Endothelial cell of umbilical vein (primary cell): ENCODE measurements at regions of chr6 and their contacts with region 1.

Region 1: GRCh38 chr6:1381481-1382330 is 7.7 kb upstream of the FOXF2 start:
- DNase-seq: peak; percentile 3
- H3K4me3 ChIP-seq: no peak overlapping the region
- H3K27ac ChIP-seq: no peak overlapping the region
- H3K4me1 ChIP-seq: no peaks in the 10 kb centered on the region
- H3K27me3 ChIP-seq: peaks cover 88 to 98% of the 10 kb centered on the region in 2 experiments
- CTCF ChIP-seq: peak; percentile 73 to 74
- POLR2A ChIP-seq: no peak

Region 2: DNA sequence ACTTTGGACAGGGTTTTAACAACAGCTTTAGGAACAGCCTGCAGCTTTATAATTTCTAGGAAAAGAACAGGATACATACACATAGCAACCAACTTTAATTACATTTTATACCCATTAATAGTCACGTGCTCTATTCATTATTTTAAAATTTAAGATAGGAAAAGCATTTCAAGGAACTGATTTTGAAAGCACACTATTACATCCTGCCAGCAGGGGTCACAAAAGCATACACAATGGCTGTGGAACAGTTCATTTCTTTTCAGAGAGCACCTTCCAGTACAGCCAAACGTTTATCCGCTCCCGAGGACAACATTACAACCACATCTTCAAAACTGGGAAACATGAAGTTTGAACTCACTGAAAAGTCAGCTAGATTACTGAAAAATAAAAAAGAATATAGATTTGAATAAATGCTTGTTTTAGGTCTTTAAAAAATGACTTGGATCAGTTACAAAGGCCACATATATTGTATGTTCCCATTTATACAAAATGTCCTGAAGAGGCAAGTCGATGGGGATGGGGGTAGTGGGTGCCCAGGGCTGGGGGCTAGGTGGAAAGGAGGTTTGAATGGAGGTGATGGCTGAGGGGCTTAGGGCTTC is 584.1 kb before region 1 on chr6:
- CTCF ChIA-PET with region 1: interaction called, 21 read pairs
- POLR2A ChIA-PET with region 1: no interaction called
- dilution Hi-C with region 1: no loop called
- intact Hi-C with region 1: loop called (anchors 1 kb)
- DNase-seq: peak; percentile 65
- H3K4me3 ChIP-seq: no peak overlapping the region
- H3K27ac ChIP-seq: no peak overlapping the region
- H3K4me1 ChIP-seq: no peaks in the 10 kb centered on the region
- H3K27me3 ChIP-seq: peaks cover 3 to 16% of the 10 kb centered on the region in 2 experiments
- CTCF ChIP-seq: peak; percentile 55 to 61
- POLR2A ChIP-seq: no peak

Region 3: DNA sequence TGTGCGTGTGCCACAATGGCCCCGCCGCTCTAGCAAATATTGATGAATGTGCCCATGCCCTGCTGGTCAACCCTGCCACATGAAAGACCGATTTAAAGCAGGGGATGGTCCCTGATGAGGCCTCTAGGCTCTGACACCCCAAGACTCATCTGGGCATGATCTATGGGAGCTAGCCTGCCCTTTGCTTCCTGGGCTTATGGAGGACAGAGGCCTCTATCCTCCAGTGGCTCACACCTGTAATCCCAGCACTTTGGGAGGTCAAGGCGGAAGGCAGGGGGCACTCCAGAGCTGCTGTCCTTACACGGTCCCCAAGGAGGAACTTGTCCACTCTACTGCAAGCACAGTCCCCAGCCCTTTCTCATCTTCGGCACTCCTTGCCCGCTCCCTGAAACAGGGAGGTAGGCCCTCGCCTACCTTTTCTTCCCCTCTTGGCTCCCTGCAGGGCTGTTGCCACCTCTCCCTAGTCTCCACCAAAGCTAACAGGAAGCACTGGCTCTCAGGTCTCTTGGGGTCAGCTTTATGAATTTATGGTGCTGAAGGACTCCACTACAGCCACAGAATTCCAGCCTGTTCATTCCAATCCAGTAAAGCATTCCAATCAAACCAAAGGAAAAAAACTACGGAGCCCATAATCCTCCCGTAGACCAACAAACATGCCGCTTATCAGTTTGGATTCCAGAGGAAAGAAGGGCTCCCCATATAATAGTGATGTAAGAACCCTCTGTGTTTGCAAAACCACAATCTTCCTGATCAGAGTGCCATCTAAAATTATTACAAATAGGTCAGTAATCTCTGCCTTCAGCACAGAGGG is 118.5 kb before region 1 on chr6:
- CTCF ChIA-PET with region 1: no interaction called
- POLR2A ChIA-PET with region 1: no interaction called
- dilution Hi-C with region 1: no loop called
- intact Hi-C with region 1: loop called (anchors 1 kb)
- DNase-seq: no peak
- H3K4me3 ChIP-seq: no peak overlapping the region
- H3K27ac ChIP-seq: no peak overlapping the region
- H3K4me1 ChIP-seq: no peaks in the 10 kb centered on the region
- H3K27me3 ChIP-seq: no peaks in the 10 kb centered on the region
- CTCF ChIP-seq: no peak
- POLR2A ChIP-seq: no peak

Region 4: DNA sequence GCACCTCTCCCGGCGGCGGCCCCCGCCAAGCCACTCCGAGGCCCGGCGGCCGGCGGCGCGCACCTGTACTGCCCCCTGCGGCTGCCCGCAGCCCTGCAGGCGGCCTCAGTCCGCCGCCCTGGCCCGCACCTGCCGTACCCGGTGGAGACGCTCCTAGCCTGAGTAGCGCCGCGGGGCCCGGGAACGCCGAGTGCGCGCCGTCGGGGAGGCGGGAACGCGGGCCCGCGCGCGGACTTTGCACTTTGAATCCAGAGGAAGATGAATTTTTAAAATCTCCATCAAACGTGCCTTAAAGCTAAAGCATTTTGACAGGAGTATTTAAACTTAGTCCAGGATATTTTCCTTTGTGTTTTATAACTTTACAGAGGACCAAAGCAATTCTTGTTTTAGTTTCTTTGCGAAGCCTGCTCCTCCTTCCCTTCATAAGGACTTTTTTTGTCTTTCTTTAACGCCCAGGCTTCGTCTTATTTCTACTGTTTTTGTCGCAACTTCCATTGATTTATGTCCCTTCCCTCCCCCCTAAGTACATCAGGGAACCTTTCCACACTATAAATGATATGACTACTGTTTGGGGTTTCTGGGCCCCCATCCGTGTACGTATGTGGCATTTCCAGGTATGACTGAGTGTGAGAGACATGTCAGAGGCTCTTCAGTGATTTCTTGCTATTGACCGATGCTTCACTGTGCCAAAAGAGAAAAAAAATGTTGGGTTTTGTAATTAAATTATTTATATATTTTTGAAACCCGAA is 67.8 kb before region 1 on chr6:
- CTCF ChIA-PET with region 1: no interaction called
- POLR2A ChIA-PET with region 1: no interaction called
- dilution Hi-C with region 1: no loop called
- intact Hi-C with region 1: loop called (anchors 2 kb)
- DNase-seq: no peak
- H3K4me3 ChIP-seq: no peak overlapping the region
- H3K27ac ChIP-seq: no peak overlapping the region
- H3K4me1 ChIP-seq: peaks cover 5% of the 10 kb centered on the region
- H3K27me3 ChIP-seq: peaks cover 46 to 69% of the 10 kb centered on the region in 2 experiments
- CTCF ChIP-seq: peak in 1 of 2 donors; percentile 26
- POLR2A ChIP-seq: no peak

Region 5: DNA sequence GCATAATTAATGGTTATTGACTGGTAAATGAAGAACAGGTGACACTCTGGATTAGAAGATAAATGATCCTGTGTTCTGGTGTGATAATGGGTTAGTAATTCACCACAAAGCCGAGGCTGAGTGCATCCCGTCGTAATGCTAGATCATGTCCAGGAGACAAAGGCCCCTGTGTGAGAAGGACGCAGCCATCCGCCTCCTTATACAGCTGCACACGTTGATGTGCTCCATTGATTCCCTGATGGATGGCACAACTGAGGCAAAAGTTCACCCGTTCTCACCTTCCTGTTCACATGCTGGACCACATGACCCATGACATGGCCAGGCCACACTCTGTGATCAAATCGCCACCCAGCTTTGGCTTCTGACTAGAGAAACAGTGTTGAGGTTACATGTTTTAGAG is 364.1 kb after region 1 on chr6:
- CTCF ChIA-PET with region 1: no interaction called
- POLR2A ChIA-PET with region 1: no interaction called
- dilution Hi-C with region 1: no loop called
- intact Hi-C with region 1: no loop called
- DNase-seq: peak; percentile 38
- H3K4me3 ChIP-seq: no peak overlapping the region
- H3K27ac ChIP-seq: no peak overlapping the region
- H3K4me1 ChIP-seq: peaks cover 7% of the 10 kb centered on the region
- H3K27me3 ChIP-seq: no peaks in the 10 kb centered on the region
- CTCF ChIP-seq: no peak
- POLR2A ChIP-seq: no peak